ENCODE measurements at regions of chr18 and their contacts with region 1.

Region 1: GRCh38 chr18:67104700-67105284 is 411.7 kb downstream of the DSEL start:
- DNase-seq: no peak
- H3K4me3 ChIP-seq: no peak overlapping the region
- H3K27ac ChIP-seq: no peak overlapping the region
- H3K4me1 ChIP-seq: no peaks in the 10 kb centered on the region
- H3K27me3 ChIP-seq: no peaks in the 10 kb centered on the region
- CTCF ChIP-seq: peak; percentile 15 to 46 (median 34)
- EP300 ChIP-seq: no peak
- POLR2A ChIP-seq: no peak

Region 2: GRCh38 chr18:67199993-67200617 is 95.3 kb after region 1 on chr18:
- intact Hi-C with region 1: loop called (anchors 10 kb)
- DNase-seq: no peak
- H3K4me3 ChIP-seq: no peak overlapping the region
- H3K27ac ChIP-seq: no peak overlapping the region
- H3K4me1 ChIP-seq: no peaks in the 10 kb centered on the region
- H3K27me3 ChIP-seq: peaks cover 0 to 14% (median 0%) of the 10 kb centered on the region in 4 donors
- CTCF ChIP-seq: peak; percentile 45 to 65 (median 54)
- EP300 ChIP-seq: no peak
- POLR2A ChIP-seq: no peak